Activated T-helper 1 cell treated with anti-CD3 and anti-CD28 coated beads, Interleukin-12 subunit alpha, Interleukin-12 subunit beta, Interleukin-2, Interleukin-4 antibody, amounts not matched to agents 30 ng/mL and 10 ng/mL and 1 ng/mL, durations not matched to agents 14 hours and 24 hours and 36 hours (primary cell): ENCODE measurements at regions of chr17 and their contacts with region 1.

Region 1: DNA sequence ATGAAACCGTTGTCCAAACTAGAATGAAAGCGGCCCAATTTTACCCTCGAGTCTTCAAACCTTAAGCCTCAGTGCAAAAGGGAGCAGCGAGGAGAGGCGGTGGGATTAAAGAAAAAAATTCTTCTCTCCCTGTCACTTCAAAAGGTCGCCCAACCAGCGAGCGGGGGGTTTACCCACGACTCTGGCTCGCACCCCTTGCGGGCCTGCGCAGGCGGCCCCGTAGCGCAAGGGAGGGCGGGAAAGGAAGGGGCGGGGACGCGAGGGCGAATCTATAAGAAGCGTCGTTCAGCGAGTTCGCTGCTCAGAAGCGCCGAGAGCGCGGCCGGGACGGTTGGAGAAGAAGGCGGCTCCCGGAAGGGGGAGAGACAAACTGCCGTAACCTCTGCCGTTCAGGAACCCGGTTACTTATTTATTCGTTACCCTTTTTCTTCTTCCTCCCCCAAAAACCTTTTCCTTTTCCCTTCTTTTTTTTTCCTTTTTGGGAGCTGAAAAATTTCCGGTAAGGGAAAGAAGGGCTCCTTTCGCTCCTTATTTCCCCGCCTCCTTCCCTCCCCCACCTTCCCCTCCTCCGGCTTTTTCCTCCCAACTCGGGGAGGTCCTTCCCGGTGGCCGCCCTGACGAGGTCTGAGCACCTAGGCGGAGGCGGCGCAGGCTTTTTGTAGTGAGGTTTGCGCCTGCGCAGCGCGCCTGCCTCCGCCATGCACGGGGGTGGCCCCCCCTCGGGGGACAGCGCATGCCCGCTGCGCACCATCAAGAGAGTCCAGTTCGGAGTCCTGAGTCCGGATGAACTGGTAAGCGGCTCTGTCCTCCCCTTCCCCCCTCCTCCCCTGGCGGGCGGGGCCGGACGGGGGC is at the start of gene POLR2A:
- DNase-seq: peak; percentile 96
- H3K4me3 Mint-ChIP-seq: peak within 1 kb of the TSS; percentile 96
- H3K27ac Mint-ChIP-seq: peak within 1 kb of the TSS; percentile 98
- H3K4me1 Mint-ChIP-seq: peaks cover 56% of the 10 kb centered on the region
- H3K27me3 Mint-ChIP-seq: no peaks in the 10 kb centered on the region
- total RNA-seq, gene POLR2A: 221 and 223 TPM in 2 replicates

Region 2: GRCh38 chr17:7214300-7215135 is 269.8 kb before region 1 on chr17:
- intact Hi-C with region 1: loop called (anchors 2 kb)
- DNase-seq: peak; percentile 99
- H3K4me3 Mint-ChIP-seq: peak overlapping the region; percentile 91
- H3K27ac Mint-ChIP-seq: peak overlapping the region; percentile 98
- H3K4me1 Mint-ChIP-seq: peaks cover 55% of the 10 kb centered on the region
- H3K27me3 Mint-ChIP-seq: peaks cover 14% of the 10 kb centered on the region

Region 3: GRCh38 chr17:7329374-7329996 is 154.8 kb before region 1 on chr17:
- intact Hi-C with region 1: loop called (anchors 1 kb)
- DNase-seq: peak; percentile 94
- H3K4me3 Mint-ChIP-seq: peak overlapping the region; percentile 93
- H3K27ac Mint-ChIP-seq: peak overlapping the region; percentile 94
- H3K4me1 Mint-ChIP-seq: peaks cover 38% of the 10 kb centered on the region
- H3K27me3 Mint-ChIP-seq: no peaks in the 10 kb centered on the region

Region 4: GRCh38 chr17:7394452-7395191 is 89.7 kb before region 1 on chr17 and contains the start of gene PLSCR3:
- intact Hi-C with region 1: loop called (anchors 2 kb)
- DNase-seq: peak; percentile 82
- H3K4me3 Mint-ChIP-seq: peak within 1 kb of the TSS; percentile 97
- H3K27ac Mint-ChIP-seq: peak within 1 kb of the TSS; percentile 96
- H3K4me1 Mint-ChIP-seq: peaks cover 22% of the 10 kb centered on the region
- H3K27me3 Mint-ChIP-seq: peaks cover 2% of the 10 kb centered on the region
- total RNA-seq, gene PLSCR3: 77.1 and 78.2 TPM in 2 replicates

Region 5: GRCh38 chr17:7548585-7549400 is 64.5 kb after region 1 on chr17 and contains the start of gene TNFSF12:
- intact Hi-C with region 1: loop called (anchors 2 kb)
- DNase-seq: peak; percentile 63
- H3K4me3 Mint-ChIP-seq: peak within 1 kb of the TSS; percentile 87
- H3K27ac Mint-ChIP-seq: peak within 1 kb of the TSS; percentile 83
- H3K4me1 Mint-ChIP-seq: peaks cover 50% of the 10 kb centered on the region
- H3K27me3 Mint-ChIP-seq: no peaks in the 10 kb centered on the region
- total RNA-seq, gene TNFSF12: 18.6 and 26.5 TPM in 2 replicates

Region 6: GRCh38 chr17:7572588-7573323 is 88.5 kb after region 1 on chr17:
- intact Hi-C with region 1: loop called (anchors 1 kb)
- DNase-seq: peak; percentile 100
- H3K4me3 Mint-ChIP-seq: peak overlapping the region; percentile 94
- H3K27ac Mint-ChIP-seq: peak overlapping the region; percentile 100
- H3K4me1 Mint-ChIP-seq: peaks cover 54% of the 10 kb centered on the region
- H3K27me3 Mint-ChIP-seq: peaks cover 2% of the 10 kb centered on the region

Region 7: DNA sequence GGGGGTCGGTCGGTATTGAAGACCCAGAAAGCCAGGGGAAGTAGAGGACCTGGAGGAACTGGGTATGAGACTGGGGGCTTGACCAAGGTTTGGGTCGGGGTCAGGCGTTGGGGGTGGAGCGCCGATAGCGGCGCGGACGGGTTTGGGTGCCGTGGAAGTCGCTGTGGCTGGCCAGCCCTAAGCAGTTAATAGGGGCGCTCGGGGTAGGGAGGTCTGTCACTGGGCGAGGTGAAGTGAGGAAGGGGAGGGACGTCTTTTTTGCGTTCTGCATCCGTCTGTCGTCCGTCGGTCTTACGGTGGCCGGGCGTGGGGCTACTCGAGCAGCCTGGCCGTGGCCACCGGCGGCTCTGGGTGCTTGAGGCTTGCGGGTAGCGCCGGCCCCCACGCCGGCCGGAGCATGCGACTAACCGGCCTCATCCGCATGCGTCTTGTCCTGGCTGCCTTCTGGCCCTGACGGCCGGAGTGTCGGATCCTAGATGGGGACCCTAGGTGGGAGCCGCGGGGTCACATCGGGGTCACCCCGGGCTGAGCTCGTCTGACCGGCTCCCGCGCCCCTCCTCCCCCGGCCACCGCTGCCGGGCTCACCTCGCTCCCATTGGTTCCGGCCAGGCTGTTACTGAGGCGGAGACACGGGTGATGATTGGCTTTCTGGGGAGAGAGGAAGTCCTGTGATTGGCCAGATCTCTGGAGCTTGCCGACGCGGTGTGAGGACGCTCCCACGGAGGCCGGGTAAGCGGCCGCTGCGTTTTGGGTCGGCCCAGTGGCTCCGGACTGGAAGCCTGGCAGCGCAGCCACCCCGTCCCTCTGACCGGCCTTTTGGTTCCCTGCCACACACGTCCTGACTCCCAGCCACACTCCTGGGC is 360.2 kb after region 1 on chr17:
- intact Hi-C with region 1: loop called (anchors 2 kb)
- DNase-seq: peak; percentile 87
- H3K4me3 Mint-ChIP-seq: peak overlapping the region; percentile 89
- H3K27ac Mint-ChIP-seq: peak overlapping the region; percentile 96
- H3K4me1 Mint-ChIP-seq: peaks cover 37% of the 10 kb centered on the region
- H3K27me3 Mint-ChIP-seq: no peaks in the 10 kb centered on the region